ENCODE measurements at regions of chr10 and their contacts with region 1.

Region 1: GRCh38 chr10:114541081-114541796 is 116.8 kb downstream of the ABLIM1 start:
- DNase-seq: peak; percentile 60 to 97 (median 79)
- ATAC-seq: peak; percentile 79
- H3K4me3 ChIP-seq: peak overlapping the region in 1 of 2 experiments; percentile 6
- H3K4me3 Mint-ChIP-seq: peak overlapping the region; percentile 53
- H3K27ac ChIP-seq: peak overlapping the region; percentile 88 to 93
- H3K27ac Mint-ChIP-seq: peak overlapping the region; percentile 99
- H3K4me1 ChIP-seq: peaks cover 91% of the 10 kb centered on the region
- H3K4me1 Mint-ChIP-seq: peaks cover 97% of the 10 kb centered on the region
- H3K27me3 ChIP-seq: no peaks in the 10 kb centered on the region
- H3K27me3 Mint-ChIP-seq: no peaks in the 10 kb centered on the region
- CTCF ChIP-seq: no peak

Region 2: GRCh38 chr10:113764582-113764981 is 776.7 kb before region 1 on chr10:
- CTCF ChIA-PET with region 1: no interaction called
- POLR2A ChIA-PET with region 1: no interaction called
- intact Hi-C with region 1: no loop called
- DNase-seq: no peak
- ATAC-seq: no peak
- H3K4me3 ChIP-seq: no peak overlapping the region
- H3K4me3 Mint-ChIP-seq: no peak overlapping the region
- H3K27ac ChIP-seq: no peak overlapping the region
- H3K27ac Mint-ChIP-seq: no peak overlapping the region
- H3K4me1 ChIP-seq: no peaks in the 10 kb centered on the region
- H3K4me1 Mint-ChIP-seq: no peaks in the 10 kb centered on the region
- H3K27me3 ChIP-seq: peaks cover 0 to under 1% of the 10 kb centered on the region in 2 experiments
- H3K27me3 Mint-ChIP-seq: peaks cover 20% of the 10 kb centered on the region
- CTCF ChIP-seq: no peak

Region 3: GRCh38 chr10:114261116-114261515 is 280.1 kb before region 1 on chr10:
- CTCF ChIA-PET with region 1: no interaction called
- POLR2A ChIA-PET with region 1: no interaction called
- intact Hi-C with region 1: no loop called
- DNase-seq: no peak
- ATAC-seq: no peak
- H3K4me3 ChIP-seq: no peak overlapping the region
- H3K4me3 Mint-ChIP-seq: no peak overlapping the region
- H3K27ac ChIP-seq: no peak overlapping the region
- H3K27ac Mint-ChIP-seq: no peak overlapping the region
- H3K4me1 ChIP-seq: no peaks in the 10 kb centered on the region
- H3K4me1 Mint-ChIP-seq: peaks cover 11% of the 10 kb centered on the region
- H3K27me3 ChIP-seq: no peaks in the 10 kb centered on the region
- H3K27me3 Mint-ChIP-seq: no peaks in the 10 kb centered on the region
- CTCF ChIP-seq: no peak

Region 4: GRCh38 chr10:114499630-114500190 is 41.5 kb before region 1 on chr10:
- CTCF ChIA-PET with region 1: interaction called, 9 read pairs
- POLR2A ChIA-PET with region 1: interaction called, 4 read pairs
- intact Hi-C with region 1: loop called in 1 of 2 experiments (anchors 1 kb)
- DNase-seq: peak in 7 of 9 experiments; percentile 19 to 80 (median 64)
- ATAC-seq: peak; percentile 50
- H3K4me3 ChIP-seq: peak overlapping the region in 1 of 2 experiments; percentile 21
- H3K4me3 Mint-ChIP-seq: peak overlapping the region; percentile 63
- H3K27ac ChIP-seq: peak overlapping the region; percentile 41 to 57
- H3K27ac Mint-ChIP-seq: peak overlapping the region; percentile 94
- H3K4me1 ChIP-seq: peaks cover 92% of the 10 kb centered on the region
- H3K4me1 Mint-ChIP-seq: peaks cover 91% of the 10 kb centered on the region
- H3K27me3 ChIP-seq: no peaks in the 10 kb centered on the region
- H3K27me3 Mint-ChIP-seq: no peaks in the 10 kb centered on the region
- CTCF ChIP-seq: no peak

Region 5: GRCh38 chr10:114515298-114515914 is 25.8 kb before region 1 on chr10:
- CTCF ChIA-PET with region 1: interaction called, 312 read pairs
- POLR2A ChIA-PET with region 1: interaction called, 28 read pairs
- intact Hi-C with region 1: loop called in 1 of 2 experiments (anchors 5 kb)
- DNase-seq: peak in 1 of 9 experiments; percentile 27
- ATAC-seq: peak; percentile 13
- H3K4me3 ChIP-seq: peak overlapping the region in 1 of 2 experiments; percentile 24
- H3K4me3 Mint-ChIP-seq: peak overlapping the region; percentile 77
- H3K27ac ChIP-seq: peak overlapping the region in 1 of 2 experiments; percentile 4
- H3K27ac Mint-ChIP-seq: peak overlapping the region; percentile 97
- H3K4me1 ChIP-seq: peaks cover 89% of the 10 kb centered on the region
- H3K4me1 Mint-ChIP-seq: peaks cover 98% of the 10 kb centered on the region
- H3K27me3 ChIP-seq: no peaks in the 10 kb centered on the region
- H3K27me3 Mint-ChIP-seq: no peaks in the 10 kb centered on the region
- CTCF ChIP-seq: no peak

Region 6: DNA sequence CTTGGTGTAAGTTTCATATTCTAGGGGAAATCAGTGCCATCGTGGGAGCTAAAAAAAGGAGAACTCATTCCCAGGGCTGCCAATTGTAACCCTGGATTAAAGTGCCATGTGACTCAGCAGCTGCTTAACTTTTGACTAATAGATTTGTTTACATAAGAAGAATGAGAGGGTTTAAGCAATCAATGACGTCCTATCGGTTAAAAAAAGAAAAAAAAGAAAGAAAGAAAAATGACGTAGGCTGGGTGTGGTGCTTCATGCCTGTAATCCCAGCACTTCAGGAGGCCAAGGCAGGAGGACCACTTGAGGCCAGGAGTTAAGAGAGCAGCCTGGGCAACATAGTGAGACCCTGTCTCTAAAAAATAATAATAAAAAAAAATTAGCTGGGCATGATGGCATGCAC is 20.8 kb before region 1 on chr10:
- CTCF ChIA-PET with region 1: interaction called, 312 read pairs
- POLR2A ChIA-PET with region 1: interaction called, 209 read pairs
- intact Hi-C with region 1: no loop called
- DNase-seq: peak in 2 of 9 experiments; percentile 43 to 56
- ATAC-seq: peak; percentile 4
- H3K4me3 ChIP-seq: no peak overlapping the region
- H3K4me3 Mint-ChIP-seq: peak overlapping the region; percentile 73
- H3K27ac ChIP-seq: peak overlapping the region; percentile 15 to 93
- H3K27ac Mint-ChIP-seq: peak overlapping the region; percentile 97
- H3K4me1 ChIP-seq: peaks cover 91% of the 10 kb centered on the region
- H3K4me1 Mint-ChIP-seq: peaks cover 94% of the 10 kb centered on the region
- H3K27me3 ChIP-seq: no peaks in the 10 kb centered on the region
- H3K27me3 Mint-ChIP-seq: no peaks in the 10 kb centered on the region
- CTCF ChIP-seq: no peak

Region 7: GRCh38 chr10:114821293-114821914 is 280.2 kb after region 1 on chr10 and contains the start of gene FHIP2A:
- CTCF ChIA-PET with region 1: interaction called, 3 read pairs
- POLR2A ChIA-PET with region 1: no interaction called
- intact Hi-C with region 1: loop called (anchors 5 kb)
- DNase-seq: peak; percentile 73 to 91 (median 82)
- ATAC-seq: peak; percentile 93
- H3K4me3 ChIP-seq: peak within 1 kb of the TSS; percentile 70 to 75
- H3K4me3 Mint-ChIP-seq: peak within 1 kb of the TSS; percentile 95
- H3K27ac ChIP-seq: peak within 1 kb of the TSS; percentile 78 to 79
- H3K27ac Mint-ChIP-seq: peak within 1 kb of the TSS; percentile 94
- H3K4me1 ChIP-seq: peaks cover 11% of the 10 kb centered on the region
- H3K4me1 Mint-ChIP-seq: peaks cover 38% of the 10 kb centered on the region
- H3K27me3 ChIP-seq: no peaks in the 10 kb centered on the region
- H3K27me3 Mint-ChIP-seq: peaks cover 2% of the 10 kb centered on the region
- CTCF ChIP-seq: peak; percentile 35
- total RNA-seq, gene FHIP2A: 62.0 to 66.4 TPM

Measured in CD8-positive, alpha-beta T cell (primary cell).